ENCODE measurements at regions of chr4 and their contacts with region 1.

Region 1: GRCh38 chr4:3037957-3038461 is 36.3 kb downstream of the HTT-AS start:
- DNase-seq: no peak
- H3K4me3 ChIP-seq: peak overlapping the region in 3 of 4 donors; percentile 17 to 47 (median 19)
- H3K27ac ChIP-seq: no peak overlapping the region
- H3K4me1 ChIP-seq: peaks cover 18 to 41% (median 28%) of the 10 kb centered on the region in 3 donors
- H3K27me3 ChIP-seq: peaks cover 0 to 15% (median 0%) of the 10 kb centered on the region in 4 donors
- CTCF ChIP-seq: no peak
- POLR2A ChIP-seq: no peak

Region 2: DNA sequence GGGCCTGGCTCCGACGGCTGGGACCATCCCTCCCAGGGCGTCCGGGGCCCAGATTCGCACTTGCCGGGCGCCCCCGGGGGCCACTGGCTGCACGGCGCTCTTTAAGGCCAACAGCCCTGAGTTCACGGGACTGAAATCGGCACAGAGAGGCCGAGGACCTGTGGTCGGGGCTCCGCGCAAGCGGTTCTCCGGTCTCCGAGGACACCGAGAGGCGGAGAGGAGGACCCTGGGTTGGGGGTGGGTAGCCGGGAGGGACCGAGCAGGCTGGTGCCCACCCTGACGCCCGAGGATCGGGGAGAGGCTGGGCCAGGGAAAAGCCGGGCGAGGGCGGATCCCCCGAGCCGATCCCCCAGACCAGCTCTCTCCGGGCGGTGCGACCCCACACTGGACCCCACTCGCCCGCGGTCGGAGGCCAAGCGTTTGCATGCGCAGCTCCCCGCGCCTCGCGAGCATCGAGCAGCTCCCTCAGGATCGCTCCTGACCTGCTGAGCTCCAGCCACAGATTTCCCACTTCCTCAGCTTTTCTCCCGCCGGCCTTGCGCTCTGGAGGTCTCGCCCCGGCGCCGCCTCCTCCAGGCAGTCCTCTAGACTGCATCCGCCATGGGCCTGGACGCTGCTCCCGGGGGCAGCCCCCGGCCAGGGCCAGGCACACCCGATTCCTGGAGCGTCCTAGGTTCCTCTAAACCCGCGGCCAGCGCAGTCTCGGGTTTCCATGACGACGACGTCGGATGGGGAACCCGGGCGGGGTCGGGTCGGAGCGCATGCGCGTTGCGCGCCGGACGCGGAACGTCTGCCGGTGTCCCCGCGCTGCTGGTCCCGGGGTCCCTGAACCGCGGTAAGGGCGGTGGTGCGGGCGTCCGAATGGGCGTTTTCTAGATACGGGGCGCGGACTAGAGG is 996.5 kb before region 1 on chr4:
- intact Hi-C with region 1: no loop called
- DNase-seq: peak; percentile 13
- H3K4me3 ChIP-seq: peak overlapping the region; percentile 49 to 79 (median 64)
- H3K27ac ChIP-seq: peak overlapping the region in 1 of 4 donors; percentile 36
- H3K4me1 ChIP-seq: peaks cover 21 to 32% (median 24%) of the 10 kb centered on the region in 3 donors
- H3K27me3 ChIP-seq: peaks cover 8 to 83% (median 15%) of the 10 kb centered on the region in 4 donors
- CTCF ChIP-seq: no peak
- POLR2A ChIP-seq: no peak

Region 3: DNA sequence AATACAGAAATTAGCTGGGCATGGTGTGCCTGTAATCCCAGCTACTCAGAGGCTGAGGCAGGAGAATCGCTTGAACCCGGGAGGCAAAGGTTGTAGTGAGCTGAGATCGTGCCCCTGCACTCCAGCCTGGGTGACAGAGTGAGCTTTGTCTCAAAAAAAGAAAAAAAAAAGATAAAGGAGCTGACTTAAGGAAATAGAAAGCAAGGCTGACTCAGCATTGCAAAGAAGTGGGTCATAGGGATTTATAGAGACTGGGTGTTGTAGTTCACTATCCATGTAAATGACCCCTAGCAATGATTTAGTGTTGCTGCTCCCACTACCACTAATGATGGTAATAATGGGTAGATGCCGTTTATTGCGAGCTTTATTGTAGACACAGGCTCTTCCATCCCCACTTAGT is 146.7 kb before region 1 on chr4:
- intact Hi-C with region 1: no loop called
- DNase-seq: no peak
- H3K4me3 ChIP-seq: no peak overlapping the region
- H3K27ac ChIP-seq: no peak overlapping the region
- H3K4me1 ChIP-seq: peaks cover 0 to 20% (median 0%) of the 10 kb centered on the region in 3 donors
- H3K27me3 ChIP-seq: no peaks in the 10 kb centered on the region
- CTCF ChIP-seq: no peak
- POLR2A ChIP-seq: no peak

Region 4: DNA sequence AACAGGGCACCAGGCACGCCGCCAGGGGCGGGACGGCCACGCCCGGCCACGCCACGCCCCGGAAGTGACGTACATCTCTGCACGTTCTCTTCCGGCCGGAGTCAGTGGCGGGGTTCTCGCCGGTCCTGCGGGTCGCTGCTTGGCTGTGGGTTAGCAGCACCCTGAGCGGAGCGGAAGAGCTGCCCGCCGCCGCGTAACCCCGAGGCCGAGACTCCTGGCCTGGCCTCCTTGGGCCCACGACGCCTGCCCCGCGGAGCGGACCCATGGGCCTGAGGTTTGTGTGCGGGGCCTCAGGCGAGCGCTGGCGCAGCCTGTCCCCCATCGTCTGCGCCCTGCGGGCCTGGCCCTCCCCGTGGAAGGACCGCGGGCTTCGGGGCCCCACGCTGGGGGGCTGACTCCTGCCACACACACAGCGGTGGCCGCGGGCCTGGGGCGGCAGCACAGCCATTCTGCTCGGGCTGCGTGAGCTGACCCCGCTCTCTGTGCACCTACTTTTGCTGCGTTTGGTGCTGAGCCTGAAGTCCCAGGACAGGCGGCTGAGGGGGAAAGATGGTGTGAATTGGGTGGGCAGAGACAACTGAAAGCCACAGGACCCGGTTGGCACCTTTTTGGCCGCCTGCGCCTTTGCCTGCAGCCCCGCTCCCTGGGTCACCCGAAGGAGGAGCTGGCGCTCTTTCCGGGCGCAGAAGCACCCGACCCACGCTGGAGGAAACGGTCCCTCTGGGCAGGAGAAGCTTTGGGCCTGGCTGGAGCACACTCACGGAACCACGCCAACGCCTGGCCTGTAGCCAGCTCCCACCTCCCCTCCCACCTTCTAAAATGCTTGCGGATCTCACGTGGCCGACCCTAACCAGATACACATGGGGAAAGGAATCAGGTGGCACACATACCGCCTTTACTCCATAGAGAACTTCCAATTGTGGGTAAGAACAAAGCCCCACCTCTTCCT is 102.9 kb before region 1 on chr4:
- intact Hi-C with region 1: no loop called
- DNase-seq: peak; percentile 70
- H3K4me3 ChIP-seq: peak overlapping the region; percentile 86 to 97 (median 91)
- H3K27ac ChIP-seq: peak overlapping the region; percentile 93 to 98 (median 95)
- H3K4me1 ChIP-seq: peaks cover 35 to 81% (median 49%) of the 10 kb centered on the region in 3 donors
- H3K27me3 ChIP-seq: no peaks in the 10 kb centered on the region
- CTCF ChIP-seq: peak in 3 of 6 experiments; percentile 22 to 31 (median 25)
- POLR2A ChIP-seq: peak; percentile 31 to 99 (median 92)

Region 5: GRCh38 chr4:2981256-2981819 is 56.7 kb before region 1 on chr4:
- intact Hi-C with region 1: loop called (anchors 10 kb)
- DNase-seq: no peak
- H3K4me3 ChIP-seq: no peak overlapping the region
- H3K27ac ChIP-seq: no peak overlapping the region
- H3K4me1 ChIP-seq: no peaks in the 10 kb centered on the region
- H3K27me3 ChIP-seq: peaks cover 0 to 4% (median 0%) of the 10 kb centered on the region in 4 donors
- CTCF ChIP-seq: no peak
- POLR2A ChIP-seq: no peak

Measured in esophagus squamous epithelium (tissue), 5 donors.